T-cell (primary cell): ENCODE measurements at regions of chr2 and their contacts with region 1.

Region 1: GRCh38 chr2:44955593-44956392 is 14.3 kb downstream of the SIX3 start:
- DNase-seq: peak; percentile 28 to 74 (median 63)
- ATAC-seq: peak; percentile 75 to 89 (median 82)
- H3K4me3 ChIP-seq: peak overlapping the region in 1 of 2 donors; percentile 42
- H3K4me3 Mint-ChIP-seq: peak overlapping the region in 1 of 3 donors; percentile 55
- H3K27ac ChIP-seq: no peak overlapping the region
- H3K27ac Mint-ChIP-seq: no peak overlapping the region
- H3K4me1 ChIP-seq: peaks cover 0 to 25% of the 10 kb centered on the region in 2 experiments
- H3K4me1 Mint-ChIP-seq: peaks cover 18 to 33% (median 20%) of the 10 kb centered on the region in 3 donors
- H3K27me3 ChIP-seq: peaks cover 7 to 66% of the 10 kb centered on the region in 2 experiments
- H3K27me3 Mint-ChIP-seq: peaks cover 50 to 74% of the 10 kb centered on the region in 2 donors

Region 2: DNA sequence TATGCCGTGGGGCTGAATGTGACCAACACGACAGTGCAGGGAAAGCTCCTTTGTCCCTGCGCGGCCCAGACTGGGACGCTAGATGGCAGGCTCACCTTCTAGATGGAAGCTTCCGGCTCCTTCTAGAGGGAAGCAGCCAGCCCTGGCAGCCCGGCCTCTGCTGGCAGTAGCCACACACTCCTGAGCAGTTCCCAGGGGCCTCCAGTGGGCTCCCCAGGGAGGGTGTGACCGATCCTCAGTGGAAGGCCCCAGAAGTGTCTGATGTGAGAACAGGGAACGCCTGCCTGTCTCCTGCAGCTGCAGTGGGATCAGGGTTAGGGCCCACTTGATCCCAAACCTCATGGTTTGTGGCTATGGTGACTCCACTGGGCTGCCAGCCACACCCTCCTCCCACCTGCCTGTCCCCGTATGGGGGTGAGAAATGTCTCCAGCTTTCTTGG is 911.5 kb before region 1 on chr2:
- CTCF ChIA-PET with region 1: interaction called, 6 to 18 read pairs
- POLR2A ChIA-PET with region 1: no interaction called
- DNase-seq: peak; percentile 42 to 81 (median 67)
- ATAC-seq: peak; percentile 96 to 100 (median 99)
- H3K4me3 ChIP-seq: no peak overlapping the region
- H3K4me3 Mint-ChIP-seq: no peak overlapping the region
- H3K27ac ChIP-seq: no peak overlapping the region
- H3K27ac Mint-ChIP-seq: no peak overlapping the region
- H3K4me1 ChIP-seq: peaks cover 0 to 7% of the 10 kb centered on the region in 2 experiments
- H3K4me1 Mint-ChIP-seq: peaks cover 2 to 6% (median 5%) of the 10 kb centered on the region in 3 donors
- H3K27me3 ChIP-seq: peaks cover 0 to 6% of the 10 kb centered on the region in 2 experiments
- H3K27me3 Mint-ChIP-seq: no peaks in the 10 kb centered on the region

Region 3: GRCh38 chr2:44392338-44392943 is 563.4 kb before region 1 on chr2:
- CTCF ChIA-PET with region 1: interaction called, 6 to 22 read pairs
- POLR2A ChIA-PET with region 1: no interaction called
- DNase-seq: peak in 26 of 35 experiments; percentile 4 to 59 (median 44)
- ATAC-seq: no peak
- H3K4me3 ChIP-seq: no peak overlapping the region
- H3K4me3 Mint-ChIP-seq: no peak overlapping the region
- H3K27ac ChIP-seq: no peak overlapping the region
- H3K27ac Mint-ChIP-seq: no peak overlapping the region
- H3K4me1 ChIP-seq: no peaks in the 10 kb centered on the region
- H3K4me1 Mint-ChIP-seq: peaks cover 8 to 14% (median 14%) of the 10 kb centered on the region in 3 donors
- H3K27me3 ChIP-seq: no peaks in the 10 kb centered on the region
- H3K27me3 Mint-ChIP-seq: no peaks in the 10 kb centered on the region

Region 4: DNA sequence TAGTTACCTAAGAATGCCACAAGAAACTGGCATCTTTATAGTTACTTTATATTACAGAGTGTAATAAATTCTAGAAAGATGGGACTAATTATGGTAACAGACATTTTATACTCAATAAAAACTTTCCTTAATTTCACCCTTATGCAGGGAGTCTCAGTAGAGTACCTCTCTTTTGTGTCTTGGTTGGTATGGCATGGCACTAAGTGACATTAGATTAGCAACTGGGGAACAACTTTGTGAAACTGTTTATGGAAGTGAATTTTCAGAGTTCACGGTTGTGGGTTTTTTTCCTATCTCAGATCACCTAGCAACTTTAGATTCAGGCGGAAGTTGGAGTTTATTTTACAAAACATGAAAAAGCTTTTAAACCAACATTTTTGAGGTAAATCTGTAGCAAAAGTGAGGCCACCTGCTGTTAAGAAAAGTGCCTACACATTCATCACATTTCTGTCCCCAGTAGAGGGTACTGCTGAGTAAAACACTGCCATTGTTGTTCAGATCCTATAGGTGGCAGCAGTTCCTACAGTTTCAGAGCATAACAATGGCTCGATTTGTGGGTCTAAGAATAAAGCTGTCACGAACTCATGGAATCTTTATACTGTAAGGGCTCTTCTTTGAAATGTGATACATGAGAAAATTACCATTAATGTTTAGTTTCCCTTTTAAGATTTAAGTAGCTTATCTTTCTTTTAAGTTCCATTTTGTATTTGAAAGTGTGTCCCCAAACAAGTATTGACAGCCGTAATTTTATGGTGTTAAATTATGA is 476.5 kb before region 1 on chr2:
- CTCF ChIA-PET with region 1: interaction called, 6 to 13 read pairs
- POLR2A ChIA-PET with region 1: no interaction called
- DNase-seq: peak in 31 of 35 experiments; percentile 0 to 81 (median 30)
- ATAC-seq: peak; percentile 99 to 100 (median 100)
- H3K4me3 ChIP-seq: no peak overlapping the region
- H3K4me3 Mint-ChIP-seq: no peak overlapping the region
- H3K27ac ChIP-seq: no peak overlapping the region
- H3K27ac Mint-ChIP-seq: no peak overlapping the region
- H3K4me1 ChIP-seq: no peaks in the 10 kb centered on the region
- H3K4me1 Mint-ChIP-seq: peaks cover 7 to 10% (median 8%) of the 10 kb centered on the region in 3 donors
- H3K27me3 ChIP-seq: no peaks in the 10 kb centered on the region
- H3K27me3 Mint-ChIP-seq: no peaks in the 10 kb centered on the region

Region 5: GRCh38 chr2:45210462-45211195 is 254.8 kb after region 1 on chr2:
- CTCF ChIA-PET with region 1: no interaction called
- POLR2A ChIA-PET with region 1: no interaction called
- DNase-seq: no peak
- ATAC-seq: no peak
- H3K4me3 ChIP-seq: no peak overlapping the region
- H3K4me3 Mint-ChIP-seq: no peak overlapping the region
- H3K27ac ChIP-seq: no peak overlapping the region
- H3K27ac Mint-ChIP-seq: no peak overlapping the region
- H3K4me1 ChIP-seq: no peaks in the 10 kb centered on the region
- H3K4me1 Mint-ChIP-seq: no peaks in the 10 kb centered on the region
- H3K27me3 ChIP-seq: peaks cover 0 to 3% of the 10 kb centered on the region in 2 experiments
- H3K27me3 Mint-ChIP-seq: peaks cover 12 to 14% of the 10 kb centered on the region in 2 donors